Activated CD4-positive, alpha-beta T cell treated with anti-CD3 and anti-CD28 coated beads for 36 hours (primary cell): ENCODE measurements at regions of chr9 and their contacts with region 1.

Region 1: DNA sequence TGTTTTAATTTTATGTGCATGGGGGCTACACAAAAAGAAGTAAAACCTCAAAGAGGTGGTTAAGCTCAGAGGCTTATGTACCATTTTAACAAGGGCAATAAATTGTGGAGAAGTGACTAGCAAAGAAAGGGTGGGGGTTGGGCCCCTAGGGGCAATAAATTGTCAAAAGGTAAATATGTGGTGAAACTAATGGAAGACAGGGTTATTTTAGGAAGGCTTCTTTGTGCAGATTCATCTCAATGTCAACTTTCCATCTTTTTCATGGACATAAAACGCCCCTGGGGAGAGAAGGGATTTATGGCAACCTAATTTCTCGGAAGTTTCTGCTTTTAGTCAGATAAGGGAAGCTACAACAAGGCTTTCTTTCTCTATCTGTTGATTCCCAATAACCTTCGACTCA is 42.5 kb upstream of the GOLM1 start:
- DNase-seq: no peak
- ATAC-seq: no peak
- H3K4me3 Mint-ChIP-seq: no peak overlapping the region
- H3K27ac Mint-ChIP-seq: no peak overlapping the region
- H3K4me1 Mint-ChIP-seq: no peaks in the 10 kb centered on the region
- H3K27me3 Mint-ChIP-seq: peaks cover 5% of the 10 kb centered on the region

Region 2: DNA sequence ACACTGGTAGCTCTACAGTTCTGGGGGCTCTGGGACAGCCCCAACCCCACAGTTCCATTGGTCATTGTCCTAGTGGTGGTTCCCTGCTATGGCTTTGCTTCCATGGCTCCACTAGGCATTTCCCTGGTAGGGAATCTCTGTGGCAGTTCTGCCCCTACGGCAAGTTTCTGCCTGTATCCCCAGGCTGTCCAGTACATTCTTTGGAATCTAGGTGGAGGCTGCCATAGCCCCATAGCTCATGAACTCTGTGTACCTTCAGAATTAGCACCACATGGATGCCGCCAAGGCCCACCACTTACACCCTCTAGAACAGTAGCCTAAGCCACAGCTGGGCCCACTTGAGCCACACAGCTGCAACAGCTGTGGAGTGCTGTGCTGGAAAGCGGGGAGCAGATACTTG is 39.2 kb before region 1 on chr9:
- CTCF ChIA-PET with region 1: no interaction called
- POLR2A ChIA-PET with region 1: no interaction called
- intact Hi-C with region 1: no loop called
- DNase-seq: no peak
- ATAC-seq: no peak
- H3K4me3 Mint-ChIP-seq: no peak overlapping the region
- H3K27ac Mint-ChIP-seq: no peak overlapping the region
- H3K4me1 Mint-ChIP-seq: peaks cover 15% of the 10 kb centered on the region
- H3K27me3 Mint-ChIP-seq: peaks cover 37% of the 10 kb centered on the region

Region 3: GRCh38 chr9:86122311-86122710 is 19.5 kb before region 1 on chr9:
- CTCF ChIA-PET with region 1: interaction called, 3 read pairs
- POLR2A ChIA-PET with region 1: interaction called, 11 read pairs
- intact Hi-C with region 1: no loop called
- DNase-seq: no peak
- ATAC-seq: no peak
- H3K4me3 Mint-ChIP-seq: no peak overlapping the region
- H3K27ac Mint-ChIP-seq: no peak overlapping the region
- H3K4me1 Mint-ChIP-seq: no peaks in the 10 kb centered on the region
- H3K27me3 Mint-ChIP-seq: peaks cover 2% of the 10 kb centered on the region